ENCODE measurements at regions of chr2 and their contacts with region 1.

Region 1: DNA sequence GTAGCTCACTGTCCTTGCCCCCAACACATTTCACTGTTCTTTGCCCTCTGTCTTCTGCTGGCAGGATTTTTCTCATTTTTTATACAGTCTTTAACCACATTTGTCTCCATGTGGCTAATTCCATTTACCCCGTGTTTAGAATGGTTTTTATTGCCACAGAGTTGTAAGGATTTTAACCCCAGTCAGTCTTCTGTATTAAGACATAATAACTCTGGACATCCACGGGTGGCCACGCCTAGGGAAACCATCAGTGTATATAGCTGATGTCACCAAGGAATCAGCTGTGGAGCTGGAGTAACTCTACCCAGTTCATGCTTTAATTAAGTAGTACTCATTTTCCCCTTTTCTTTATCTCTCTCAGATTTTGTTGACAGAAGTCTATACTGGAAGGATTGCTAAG is 139.8 kb downstream of the MAP4K4 start:
- DNase-seq: no peak
- ATAC-seq: no peak
- H3K4me3 ChIP-seq: no peak overlapping the region
- H3K27ac ChIP-seq: no peak overlapping the region
- H3K4me1 ChIP-seq: no peaks in the 10 kb centered on the region
- H3K27me3 ChIP-seq: no peaks in the 10 kb centered on the region

Region 2: DNA sequence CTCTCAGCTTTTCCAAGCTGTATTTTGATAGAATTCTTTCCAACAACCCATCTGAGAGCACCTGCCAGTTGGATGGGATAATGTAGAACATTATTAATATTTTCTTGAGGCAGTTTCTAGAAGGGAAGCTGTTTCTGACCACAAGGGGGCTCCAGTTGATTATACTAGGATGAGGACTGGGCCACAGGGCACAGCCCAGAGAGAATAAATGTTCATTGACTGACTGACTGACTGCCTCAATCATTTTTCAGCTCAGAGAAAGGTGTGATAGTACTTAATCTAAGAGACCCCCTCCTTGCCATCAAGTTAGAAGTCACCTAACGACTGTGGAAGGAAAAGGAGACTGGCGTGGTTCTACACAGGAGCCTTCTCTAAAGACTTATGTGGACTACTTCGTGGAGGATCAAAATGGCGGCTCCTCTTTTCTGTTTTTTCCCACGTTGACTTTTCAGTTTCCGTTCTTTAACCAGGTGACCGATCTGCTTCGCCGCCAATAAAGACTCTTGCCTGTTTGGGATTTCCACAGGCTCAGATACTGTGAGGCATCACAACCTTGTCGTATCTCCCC is 418.2 kb before region 1 on chr2:
- intact Hi-C with region 1: loop called in 2 of 4 experiments (anchors 5 to 10 kb)
- DNase-seq: peak in 2 of 3 donors; percentile 35 to 58
- ATAC-seq: peak; percentile 70 to 83
- H3K4me3 ChIP-seq: no peak overlapping the region
- H3K27ac ChIP-seq: no peak overlapping the region
- H3K4me1 ChIP-seq: no peaks in the 10 kb centered on the region
- H3K27me3 ChIP-seq: no peaks in the 10 kb centered on the region

Region 3: DNA sequence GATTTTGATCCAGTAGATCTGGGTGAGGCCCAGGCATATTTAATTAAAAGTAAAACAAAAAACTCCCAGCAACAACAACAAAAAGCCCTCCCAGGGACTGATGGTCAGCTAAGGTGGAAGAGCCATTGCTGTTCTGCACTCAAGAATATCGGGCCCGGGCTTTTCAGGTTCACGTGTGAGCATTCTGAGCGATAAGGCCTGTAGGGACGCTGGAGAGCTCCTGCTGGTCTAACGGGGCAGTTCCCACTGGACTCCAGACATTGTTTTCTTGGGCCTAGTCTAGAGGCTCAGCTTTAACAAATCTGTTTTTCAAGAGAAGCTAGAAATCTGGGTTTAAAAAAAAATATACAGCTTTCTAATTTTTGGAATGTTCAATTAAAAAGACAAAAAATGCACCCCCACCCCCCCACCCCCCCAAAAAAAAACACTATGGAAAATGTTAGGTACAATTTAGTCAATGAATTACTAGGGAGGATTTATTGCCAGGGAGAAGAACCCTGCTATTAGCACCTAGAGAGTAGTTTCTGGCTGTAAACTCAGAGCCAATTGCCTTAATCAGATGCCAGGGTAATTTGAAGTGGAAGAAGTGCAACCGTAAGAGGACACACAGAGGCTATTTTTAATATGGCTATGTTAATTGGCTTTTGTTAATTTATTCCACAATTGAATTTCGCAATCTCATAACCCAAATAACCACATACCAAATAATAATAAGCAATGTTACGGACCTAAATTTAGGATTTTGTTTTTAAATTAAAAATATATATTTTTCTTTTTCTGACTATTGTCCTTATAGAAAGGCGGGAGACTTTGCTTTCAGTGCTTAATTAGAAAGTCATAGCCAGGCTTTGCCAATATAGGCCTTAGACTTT is 60.9 kb before region 1 on chr2:
- intact Hi-C with region 1: no loop called
- DNase-seq: no peak
- ATAC-seq: peak in 1 of 2 donors; percentile 65
- H3K4me3 ChIP-seq: no peak overlapping the region
- H3K27ac ChIP-seq: no peak overlapping the region
- H3K4me1 ChIP-seq: peaks cover 36% of the 10 kb centered on the region
- H3K27me3 ChIP-seq: no peaks in the 10 kb centered on the region